H1 (cell line): ENCODE measurements at regions of chr1 and their contacts with region 1.

Region 1: GRCh38 chr1:203290261-203291089 is 14.8 kb upstream of the BTG2 start:
- DNase-seq: peak; percentile 46 to 92
- H3K4me3 ChIP-seq: peak overlapping the region; percentile 23 to 53 (median 42); a peak in 7 of 8 replicates
- H3K27ac ChIP-seq: peak overlapping the region; percentile 49
- H3K4me1 ChIP-seq: peaks cover 15 to 34% (median 22%) of the 10 kb centered on the region in 4 experiments
- H3K27me3 ChIP-seq: peaks cover 0 to 23% (median 13%) of the 10 kb centered on the region in 4 experiments; a peak in 4 of 7 replicates
- CTCF ChIP-seq: 0 out of 4 replicates have a peak, but pooled peaks of 1 of the 3 experiments have one; percentile 0
- EP300 ChIP-seq: peak in 1 of 2 experiments; percentile 94; a peak in 1 of 3 replicates
- POLR2A ChIP-seq: peak in 1 of 2 experiments; percentile 25; a peak in 2 of 3 replicates
- RAD21 ChIP-seq: no peak

Region 2: DNA sequence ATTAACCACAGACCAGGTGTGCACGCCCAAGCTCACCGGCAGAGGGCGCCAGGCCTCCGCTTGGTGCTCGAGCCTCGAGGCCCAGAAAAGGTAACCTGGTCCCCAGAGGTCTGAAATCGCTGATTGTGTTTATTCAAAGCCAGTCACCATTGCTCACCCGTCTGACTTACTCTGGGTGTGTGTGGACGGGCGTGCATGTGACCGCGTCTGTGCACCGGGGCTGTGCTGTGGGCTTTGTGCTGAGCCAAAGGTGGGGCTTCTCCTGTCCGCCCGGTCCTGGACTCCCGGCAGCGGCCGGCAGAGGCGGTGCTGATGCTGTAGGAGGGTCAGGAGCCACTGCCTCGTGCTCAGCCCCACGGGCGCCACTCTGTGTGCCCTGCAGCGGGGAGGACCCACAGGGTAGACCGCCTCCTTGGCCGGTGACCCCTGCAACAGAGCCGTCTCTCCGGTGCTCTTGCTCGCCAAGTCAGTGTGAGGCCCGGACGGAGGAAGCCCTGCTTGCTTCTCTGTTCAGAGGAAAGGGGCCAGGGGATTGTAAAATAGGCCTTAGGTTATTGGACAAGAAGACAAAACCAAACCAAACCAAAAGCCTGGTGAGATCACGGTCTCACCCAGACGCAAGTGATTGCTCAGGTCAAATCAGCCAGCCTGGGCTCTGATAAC is 17.1 kb before region 1 on chr1:
- CTCF ChIA-PET with region 1: interaction called, 320 read pairs
- POLR2A ChIA-PET with region 1: interaction called, 4 read pairs
- DNase-seq: peak; percentile 46 to 94
- H3K4me3 ChIP-seq: peak overlapping the region in 3 of 4 experiments; percentile 37 to 57 (median 52); a peak in 6 of 8 replicates
- H3K27ac ChIP-seq: no peak overlapping the region
- H3K4me1 ChIP-seq: peaks cover under 1 to 9% (median 7%) of the 10 kb centered on the region in 4 experiments; a peak in 6 of 7 replicates
- H3K27me3 ChIP-seq: peaks cover 0 to 31% (median 10%) of the 10 kb centered on the region in 4 experiments; a peak in 5 of 7 replicates
- CTCF ChIP-seq: peak; percentile 91 to 94 (median 92)
- EP300 ChIP-seq: no peak
- POLR2A ChIP-seq: no peak
- RAD21 ChIP-seq: peak; percentile 87 to 88

Region 3: GRCh38 chr1:203320591-203321272 is 30.3 kb after region 1 on chr1:
- CTCF ChIA-PET with region 1: interaction called, 12 read pairs
- POLR2A ChIA-PET with region 1: interaction called, 3 read pairs
- DNase-seq: peak in 1 of 2 experiments; percentile 60
- H3K4me3 ChIP-seq: no peak overlapping the region
- H3K27ac ChIP-seq: no peak overlapping the region
- H3K4me1 ChIP-seq: peaks cover 3 to 17% (median 11%) of the 10 kb centered on the region in 4 experiments
- H3K27me3 ChIP-seq: peaks cover 0 to 49% (median 17%) of the 10 kb centered on the region in 4 experiments; a peak in 6 of 7 replicates
- CTCF ChIP-seq: peak in 1 of 3 experiments; percentile 8; a peak in 1 of 4 replicates
- EP300 ChIP-seq: no peak
- POLR2A ChIP-seq: no peak
- RAD21 ChIP-seq: 0 out of 4 replicates have a peak, but pooled peaks of 1 of the 2 experiments have one; percentile 17

Region 4: DNA sequence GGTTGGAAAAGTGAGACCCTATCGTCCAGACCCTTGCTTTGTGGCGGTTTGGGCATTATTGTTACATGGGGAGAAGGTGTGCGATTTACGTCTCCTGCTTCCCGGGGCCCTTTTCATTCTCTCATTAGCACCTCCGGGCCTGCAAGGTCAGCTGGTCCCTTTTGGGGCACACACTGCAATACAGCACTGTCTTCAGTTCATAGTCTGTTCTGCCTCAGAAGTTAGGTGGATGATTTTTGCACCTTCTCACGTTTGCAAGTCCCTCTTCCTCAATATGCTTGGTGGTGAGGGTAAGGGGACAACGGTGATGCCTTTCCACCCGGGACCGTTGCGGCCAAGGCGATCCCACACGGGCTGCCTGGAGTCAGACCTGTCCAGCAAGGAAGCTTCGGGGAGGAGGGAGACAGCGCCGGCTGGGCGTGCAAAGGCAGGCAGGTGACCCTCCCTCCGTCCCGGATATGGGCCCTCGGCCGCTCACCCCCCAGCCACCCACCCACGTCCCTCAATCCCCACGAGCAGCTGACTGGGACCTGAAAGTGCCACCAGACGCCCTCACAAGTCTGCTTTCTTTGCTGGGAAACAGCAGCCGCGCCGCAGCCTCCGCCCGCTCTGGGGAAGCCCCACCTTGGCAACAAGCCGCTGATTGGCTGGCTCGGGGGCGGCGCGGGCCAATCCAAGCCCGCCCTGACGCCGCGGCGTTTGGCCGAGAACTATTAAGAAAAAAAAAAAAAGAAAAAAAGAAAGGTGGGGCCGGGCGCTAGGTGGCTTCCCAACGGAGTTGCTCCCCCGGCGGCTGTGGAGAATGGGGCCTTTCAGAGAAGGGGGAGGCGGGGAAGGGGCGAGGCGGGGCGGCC is 36.6 kb after region 1 on chr1:
- CTCF ChIA-PET with region 1: interaction called, 785 read pairs
- POLR2A ChIA-PET with region 1: interaction called, 3 read pairs
- DNase-seq: peak in 1 of 2 experiments; percentile 94
- H3K4me3 ChIP-seq: peak overlapping the region; percentile 41 to 64 (median 46); a peak in 7 of 8 replicates
- H3K27ac ChIP-seq: no peak overlapping the region
- H3K4me1 ChIP-seq: peaks cover 8 to 30% (median 21%) of the 10 kb centered on the region in 4 experiments
- H3K27me3 ChIP-seq: peaks cover 0 to 24% (median 16%) of the 10 kb centered on the region in 4 experiments; a peak in 4 of 7 replicates
- CTCF ChIP-seq: peak in 1 of 3 experiments; percentile 37; a peak in 2 of 4 replicates
- EP300 ChIP-seq: no peak
- POLR2A ChIP-seq: peak in 1 of 2 experiments; percentile 29; a peak in 1 of 3 replicates
- RAD21 ChIP-seq: 0 out of 4 replicates have a peak, but pooled peaks of 1 of the 2 experiments have one; percentile 5